ENCODE measurements at regions of chr21 and their contacts with region 1.

Region 1: GRCh38 chr21:26437326-26438009 is 135.6 kb downstream of the CYYR1 start:
- DNase-seq: no peak
- ATAC-seq: no peak
- H3K4me3 ChIP-seq: no peak overlapping the region
- H3K27ac ChIP-seq: no peak overlapping the region
- H3K4me1 ChIP-seq: no peaks in the 10 kb centered on the region
- H3K27me3 ChIP-seq: no peaks in the 10 kb centered on the region
- CTCF ChIP-seq: no peak

Region 2: DNA sequence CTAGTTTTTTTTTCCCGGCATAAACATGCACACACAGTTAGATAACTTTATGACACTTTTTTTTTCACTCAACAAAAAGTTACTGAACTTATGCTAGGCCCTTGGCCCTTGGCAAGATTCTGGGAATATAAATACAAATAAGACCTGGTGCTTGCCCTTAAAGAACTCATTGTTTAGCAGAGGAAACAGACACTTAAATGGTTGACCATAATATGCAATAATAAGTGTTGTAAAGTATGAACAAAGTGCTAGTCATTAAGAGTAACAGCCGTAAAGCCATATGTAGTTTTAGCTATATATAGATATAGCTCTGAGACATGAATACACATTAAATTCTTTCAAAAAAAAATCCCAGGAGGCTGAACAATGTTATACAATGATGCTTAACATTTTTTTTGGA is 62.7 kb before region 1 on chr21:
- intact Hi-C with region 1: no loop called
- DNase-seq: no peak
- ATAC-seq: no peak
- H3K4me3 ChIP-seq: no peak overlapping the region
- H3K27ac ChIP-seq: no peak overlapping the region
- H3K4me1 ChIP-seq: no peaks in the 10 kb centered on the region
- H3K27me3 ChIP-seq: no peaks in the 10 kb centered on the region
- CTCF ChIP-seq: no peak

Region 3: GRCh38 chr21:26471099-26471471 is 33.6 kb after region 1 on chr21:
- intact Hi-C with region 1: loop called in 1 of 10 experiments (anchors 5 kb)
- DNase-seq: no peak
- ATAC-seq: no peak
- H3K4me3 ChIP-seq: no peak overlapping the region
- H3K27ac ChIP-seq: no peak overlapping the region
- H3K4me1 ChIP-seq: peaks cover 0 to 10% (median 0%) of the 10 kb centered on the region in 9 donors
- H3K27me3 ChIP-seq: no peaks in the 10 kb centered on the region
- CTCF ChIP-seq: no peak

Region 4: GRCh38 chr21:26495283-26495845 is 57.9 kb after region 1 on chr21:
- intact Hi-C with region 1: no loop called
- DNase-seq: no peak
- ATAC-seq: no peak
- H3K4me3 ChIP-seq: no peak overlapping the region
- H3K27ac ChIP-seq: no peak overlapping the region
- H3K4me1 ChIP-seq: peaks cover 0 to 4% (median 0%) of the 10 kb centered on the region in 9 donors
- H3K27me3 ChIP-seq: no peaks in the 10 kb centered on the region
- CTCF ChIP-seq: no peak

Region 5: GRCh38 chr21:26506956-26507355 is 69.5 kb after region 1 on chr21:
- intact Hi-C with region 1: no loop called
- DNase-seq: no peak
- ATAC-seq: no peak
- H3K4me3 ChIP-seq: no peak overlapping the region
- H3K27ac ChIP-seq: no peak overlapping the region
- H3K4me1 ChIP-seq: peaks cover 0 to 29% (median 0%) of the 10 kb centered on the region in 9 donors
- H3K27me3 ChIP-seq: no peaks in the 10 kb centered on the region
- CTCF ChIP-seq: no peak

Region 6: GRCh38 chr21:26587736-26588201 is 150.3 kb after region 1 on chr21:
- intact Hi-C with region 1: no loop called
- DNase-seq: no peak
- ATAC-seq: peak in 3 of 8 donors; percentile 38 to 62 (median 41)
- H3K4me3 ChIP-seq: peak overlapping the region in 6 of 10 donors; percentile 16 to 33 (median 23)
- H3K27ac ChIP-seq: peak overlapping the region in 3 of 10 donors; percentile 9 to 46 (median 17)
- H3K4me1 ChIP-seq: peaks cover 0 to 13% (median 0%) of the 10 kb centered on the region in 9 donors
- H3K27me3 ChIP-seq: no peaks in the 10 kb centered on the region
- CTCF ChIP-seq: no peak

Measured in heart right ventricle (tissue), 16 donors.